MCF 10A (cell line): ENCODE measurements at regions of chr6 and their contacts with region 1.

Region 1: DNA sequence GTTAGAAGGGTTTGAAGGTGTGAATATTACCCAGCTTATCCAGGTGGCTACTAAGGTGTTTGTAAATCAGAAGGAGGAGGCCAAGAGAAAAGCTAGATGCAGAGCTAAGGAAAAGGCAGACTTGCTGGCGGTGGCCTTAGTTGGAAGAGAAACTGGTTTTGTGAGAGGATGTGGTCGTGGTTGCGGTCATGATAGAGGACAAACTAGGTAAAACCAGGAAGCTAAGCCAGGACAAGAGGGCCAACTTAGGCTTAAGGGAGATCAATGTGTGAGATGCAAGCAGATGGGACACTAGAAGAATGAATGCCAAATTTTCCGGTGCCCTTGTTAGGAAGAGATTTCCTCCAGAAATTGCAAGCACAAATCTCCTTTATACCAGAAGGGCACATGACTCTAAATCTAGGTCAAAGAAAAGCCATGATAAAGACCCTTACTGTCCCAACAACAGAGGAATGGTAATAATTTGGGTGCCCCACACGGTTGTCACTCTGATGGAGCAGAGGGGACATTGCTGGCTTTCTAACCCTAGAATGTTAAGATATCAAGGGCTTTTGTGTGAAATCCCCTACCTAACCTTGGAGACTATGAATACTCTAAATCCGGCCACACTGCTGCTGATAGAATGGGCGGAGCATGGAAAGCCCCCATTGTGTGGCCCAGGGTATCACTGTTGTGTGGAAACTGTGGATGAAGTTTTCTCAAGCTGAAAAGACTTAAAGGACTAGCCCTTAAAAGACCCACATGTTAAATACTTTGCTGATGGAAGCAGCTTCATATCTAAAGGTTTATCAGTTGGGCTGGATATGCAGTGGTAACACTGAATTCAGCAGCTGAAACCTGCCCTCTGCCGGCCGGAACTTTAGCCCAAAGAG is 7.8 kb downstream of the IL22RA2 start:
- DNase-seq: peak; percentile 72
- H3K4me3 Mint-ChIP-seq: no peak overlapping the region
- H3K27ac Mint-ChIP-seq: no peak overlapping the region
- H3K4me1 Mint-ChIP-seq: peaks cover 32% of the 10 kb centered on the region
- H3K27me3 Mint-ChIP-seq: no peaks in the 10 kb centered on the region
- CTCF ChIP-seq: peak; percentile 58

Region 2: DNA sequence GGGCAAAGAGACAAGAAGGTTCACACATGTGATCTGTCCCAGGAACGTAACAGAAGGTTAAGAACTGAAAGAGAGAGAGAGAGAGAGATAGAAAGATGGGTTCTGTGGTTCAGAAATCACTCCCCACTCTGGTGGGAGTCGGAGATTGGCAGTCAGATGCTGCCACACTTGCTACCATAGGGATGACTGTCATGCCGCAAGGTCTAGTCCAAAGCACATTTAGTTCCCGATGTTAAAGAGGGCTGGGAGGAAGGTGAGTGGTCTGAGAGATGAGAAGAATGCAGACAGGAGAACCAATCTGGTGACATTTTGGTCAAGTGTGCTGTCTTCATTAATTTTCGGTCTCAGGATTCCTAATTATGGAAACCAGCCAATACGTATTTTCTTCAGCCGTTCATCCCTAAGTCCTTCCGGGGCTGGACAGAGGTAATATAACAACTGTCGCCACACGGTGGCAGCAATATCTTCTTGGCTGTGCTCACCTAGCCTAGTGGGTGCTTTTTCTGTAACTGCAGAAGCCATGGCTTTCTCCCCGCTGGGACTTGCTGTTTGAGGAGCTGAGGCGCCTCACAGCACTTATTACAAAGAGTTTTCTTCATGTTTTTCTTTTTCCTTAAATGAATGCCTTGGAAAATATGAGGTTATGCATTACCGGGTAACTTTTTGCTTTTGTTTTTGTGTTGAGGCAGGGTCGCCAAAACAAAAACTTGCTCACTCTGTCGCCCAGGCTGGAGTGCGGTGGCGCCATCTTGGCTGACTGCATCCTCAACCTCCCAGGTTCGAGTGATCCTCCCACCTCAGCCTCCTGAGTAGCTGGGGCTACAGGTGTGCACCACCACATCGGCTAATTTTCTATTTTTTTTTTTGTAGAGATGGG is 197.5 kb before region 1 on chr6:
- CTCF ChIA-PET with region 1: no interaction called
- POLR2A ChIA-PET with region 1: no interaction called
- intact Hi-C with region 1: loop called (anchors 5 kb)
- DNase-seq: peak; percentile 85
- H3K4me3 Mint-ChIP-seq: no peak overlapping the region
- H3K27ac Mint-ChIP-seq: no peak overlapping the region
- H3K4me1 Mint-ChIP-seq: peaks cover 5% of the 10 kb centered on the region
- H3K27me3 Mint-ChIP-seq: no peaks in the 10 kb centered on the region
- CTCF ChIP-seq: peak; percentile 51

Region 3: DNA sequence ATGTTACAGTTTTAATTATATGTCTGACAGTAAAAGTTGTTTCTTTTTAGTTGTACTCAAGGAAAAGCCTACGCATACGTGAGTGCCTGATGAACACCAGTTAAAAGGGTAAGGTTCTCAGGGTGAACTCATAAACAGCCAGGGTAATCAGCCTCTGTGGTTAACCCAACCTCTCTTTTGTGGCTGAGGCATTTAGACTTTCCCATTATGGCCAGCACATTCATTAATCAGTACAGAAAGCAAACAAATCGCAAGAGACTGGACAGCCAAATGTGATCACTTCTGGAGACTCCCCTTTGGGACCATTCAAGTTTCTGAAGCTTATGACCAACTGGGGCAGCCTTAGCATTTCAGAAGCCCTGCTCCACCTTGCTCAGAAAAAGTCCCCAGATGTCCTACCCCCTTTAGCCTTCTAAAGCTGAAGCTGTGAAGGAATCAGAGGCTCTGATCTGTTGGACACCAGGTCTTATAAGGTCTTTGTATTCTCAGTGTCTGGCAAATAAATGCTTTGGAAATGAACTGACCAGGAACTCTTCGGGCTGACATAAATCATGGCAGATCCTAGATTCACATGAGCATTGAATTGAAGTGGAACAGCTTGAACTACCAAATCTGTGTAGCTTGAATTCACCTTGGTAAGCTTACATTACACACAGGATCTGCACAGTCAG is 139.7 kb before region 1 on chr6:
- CTCF ChIA-PET with region 1: no interaction called
- POLR2A ChIA-PET with region 1: no interaction called
- intact Hi-C with region 1: no loop called
- DNase-seq: no peak
- H3K4me3 Mint-ChIP-seq: no peak overlapping the region
- H3K27ac Mint-ChIP-seq: peak overlapping the region; percentile 74
- H3K4me1 Mint-ChIP-seq: peaks cover 25% of the 10 kb centered on the region
- H3K27me3 Mint-ChIP-seq: no peaks in the 10 kb centered on the region
- CTCF ChIP-seq: no peak

Region 4: GRCh38 chr6:137089305-137089704 is 76.3 kb before region 1 on chr6:
- CTCF ChIA-PET with region 1: interaction called, 116 read pairs
- POLR2A ChIA-PET with region 1: interaction called, 40 read pairs
- intact Hi-C with region 1: loop called (anchors 1 kb)
- DNase-seq: no peak
- H3K4me3 Mint-ChIP-seq: no peak overlapping the region
- H3K27ac Mint-ChIP-seq: no peak overlapping the region
- H3K4me1 Mint-ChIP-seq: peaks cover 3% of the 10 kb centered on the region
- H3K27me3 Mint-ChIP-seq: no peaks in the 10 kb centered on the region
- CTCF ChIP-seq: no peak

Region 5: GRCh38 chr6:137105375-137105774 is 60.2 kb before region 1 on chr6:
- CTCF ChIA-PET with region 1: interaction called, 16 read pairs
- POLR2A ChIA-PET with region 1: interaction called, 18 read pairs
- intact Hi-C with region 1: no loop called
- DNase-seq: peak; percentile 81
- H3K4me3 Mint-ChIP-seq: no peak overlapping the region
- H3K27ac Mint-ChIP-seq: peak overlapping the region; percentile 85
- H3K4me1 Mint-ChIP-seq: peaks cover 25% of the 10 kb centered on the region
- H3K27me3 Mint-ChIP-seq: no peaks in the 10 kb centered on the region
- CTCF ChIP-seq: no peak

Region 6: DNA sequence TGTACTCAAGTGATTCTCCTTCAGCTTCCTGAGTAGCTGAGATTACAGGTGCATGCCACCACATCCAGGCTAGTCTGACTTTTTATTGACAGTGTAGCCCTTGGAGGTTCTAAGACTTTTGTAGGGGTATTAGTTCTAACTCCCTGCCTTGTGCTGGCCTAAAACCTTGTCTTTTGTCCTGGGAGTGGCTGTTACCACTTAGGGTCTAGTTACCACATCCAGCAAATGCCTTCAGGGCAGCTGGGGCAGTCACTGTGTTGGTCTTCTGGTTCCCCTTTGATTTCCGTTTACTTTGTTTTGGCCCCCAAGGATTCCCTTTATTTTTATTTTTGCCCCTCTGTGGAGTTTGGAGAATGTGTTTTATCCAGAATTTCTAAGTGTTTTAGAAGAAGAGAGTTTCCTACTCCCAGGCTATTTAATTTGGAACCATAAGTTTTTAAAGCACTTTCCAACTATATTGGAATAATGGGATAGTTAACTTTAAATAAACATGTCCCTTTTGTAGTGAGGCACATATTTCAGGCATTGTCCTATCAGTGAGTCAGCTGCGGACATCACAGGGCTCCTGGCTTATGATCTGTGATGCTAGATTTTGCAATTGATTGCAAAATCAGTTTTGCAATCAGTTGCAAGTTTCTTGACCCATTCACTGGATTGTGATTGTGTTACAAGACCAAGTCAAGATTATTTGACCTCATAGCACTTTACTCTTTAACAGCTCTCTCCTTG is 17.1 kb before region 1 on chr6:
- CTCF ChIA-PET with region 1: interaction called, 37 read pairs
- POLR2A ChIA-PET with region 1: interaction called, 18 read pairs
- intact Hi-C with region 1: no loop called
- DNase-seq: peak; percentile 93
- H3K4me3 Mint-ChIP-seq: peak overlapping the region; percentile 1
- H3K27ac Mint-ChIP-seq: peak overlapping the region; percentile 88
- H3K4me1 Mint-ChIP-seq: peaks cover 34% of the 10 kb centered on the region
- H3K27me3 Mint-ChIP-seq: no peaks in the 10 kb centered on the region
- CTCF ChIP-seq: no peak